ENCODE measurements at regions of chr10 and their contacts with region 1.

Region 1: DNA sequence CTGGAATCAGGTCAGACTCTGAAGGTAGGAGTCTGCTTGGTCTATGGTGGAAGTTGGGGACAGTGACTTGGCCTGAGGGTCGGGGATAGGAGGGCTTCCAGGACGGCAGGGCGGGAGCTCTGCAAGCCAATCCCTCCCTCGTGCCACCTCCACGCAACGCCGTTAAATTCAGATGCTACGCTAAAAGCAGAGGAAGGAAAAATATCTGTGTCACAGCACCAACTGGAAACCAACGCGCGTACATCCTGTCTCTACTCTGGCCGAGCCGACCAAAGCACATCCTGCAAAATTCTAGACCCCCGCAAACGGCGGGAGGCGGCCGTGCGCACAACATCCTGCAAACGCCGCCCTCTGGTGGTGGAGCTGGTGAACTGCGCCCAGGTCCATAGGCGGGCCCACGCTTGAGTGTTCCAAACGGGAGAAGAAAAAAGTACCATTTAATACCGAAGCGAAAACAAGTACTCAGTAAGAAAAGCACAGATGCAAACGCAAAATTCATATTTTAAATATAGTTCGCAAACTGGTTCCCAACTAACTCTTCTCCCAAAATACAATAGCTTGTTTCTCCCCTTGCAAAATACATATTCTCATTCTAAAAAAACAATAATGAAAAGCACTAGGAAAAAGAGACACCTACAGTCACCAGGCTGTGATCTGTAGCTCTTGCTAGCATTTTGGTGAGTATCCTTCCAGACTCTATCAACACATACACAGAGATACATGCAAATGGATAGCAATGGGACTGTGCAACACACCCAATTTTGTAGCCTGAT is 45.7 kb upstream of the HSPA12A start:
- DNase-seq: peak; percentile 84
- H3K4me3 Mint-ChIP-seq: peak overlapping the region; percentile 36
- H3K27ac Mint-ChIP-seq: no peak overlapping the region
- H3K4me1 Mint-ChIP-seq: peaks cover 11% of the 10 kb centered on the region
- H3K27me3 Mint-ChIP-seq: peaks cover 34% of the 10 kb centered on the region

Region 2: DNA sequence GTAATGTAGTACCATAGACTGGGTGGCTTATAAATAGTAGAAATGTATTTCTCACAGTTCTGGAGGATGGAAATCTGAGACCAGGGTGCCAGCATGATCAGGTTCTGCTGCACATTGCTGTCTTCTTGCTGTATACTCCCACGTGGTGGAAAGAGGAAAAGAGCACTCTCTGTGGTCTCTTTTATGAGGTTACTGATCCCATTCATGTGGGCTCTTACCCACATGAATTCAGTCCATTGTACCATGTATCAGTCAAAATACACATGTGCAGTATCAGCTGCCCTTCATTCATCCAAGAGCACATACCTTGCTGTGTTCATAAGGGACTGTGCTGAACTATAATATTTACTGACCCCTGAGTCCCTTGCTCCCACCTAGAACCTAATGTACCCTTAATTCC is 150.2 kb before region 1 on chr10:
- CTCF ChIA-PET with region 1: no interaction called
- intact Hi-C with region 1: no loop called
- DNase-seq: no peak
- H3K4me3 Mint-ChIP-seq: no peak overlapping the region
- H3K27ac Mint-ChIP-seq: no peak overlapping the region
- H3K4me1 Mint-ChIP-seq: no peaks in the 10 kb centered on the region
- H3K27me3 Mint-ChIP-seq: peaks cover 34% of the 10 kb centered on the region

Region 3: GRCh38 chr10:116683821-116684220 is 104.3 kb before region 1 on chr10:
- CTCF ChIA-PET with region 1: interaction called, 61 read pairs
- intact Hi-C with region 1: loop called (anchors 1 kb)
- DNase-seq: no peak
- H3K4me3 Mint-ChIP-seq: no peak overlapping the region
- H3K27ac Mint-ChIP-seq: no peak overlapping the region
- H3K4me1 Mint-ChIP-seq: peaks cover 2% of the 10 kb centered on the region
- H3K27me3 Mint-ChIP-seq: peaks cover 27% of the 10 kb centered on the region

Region 4: DNA sequence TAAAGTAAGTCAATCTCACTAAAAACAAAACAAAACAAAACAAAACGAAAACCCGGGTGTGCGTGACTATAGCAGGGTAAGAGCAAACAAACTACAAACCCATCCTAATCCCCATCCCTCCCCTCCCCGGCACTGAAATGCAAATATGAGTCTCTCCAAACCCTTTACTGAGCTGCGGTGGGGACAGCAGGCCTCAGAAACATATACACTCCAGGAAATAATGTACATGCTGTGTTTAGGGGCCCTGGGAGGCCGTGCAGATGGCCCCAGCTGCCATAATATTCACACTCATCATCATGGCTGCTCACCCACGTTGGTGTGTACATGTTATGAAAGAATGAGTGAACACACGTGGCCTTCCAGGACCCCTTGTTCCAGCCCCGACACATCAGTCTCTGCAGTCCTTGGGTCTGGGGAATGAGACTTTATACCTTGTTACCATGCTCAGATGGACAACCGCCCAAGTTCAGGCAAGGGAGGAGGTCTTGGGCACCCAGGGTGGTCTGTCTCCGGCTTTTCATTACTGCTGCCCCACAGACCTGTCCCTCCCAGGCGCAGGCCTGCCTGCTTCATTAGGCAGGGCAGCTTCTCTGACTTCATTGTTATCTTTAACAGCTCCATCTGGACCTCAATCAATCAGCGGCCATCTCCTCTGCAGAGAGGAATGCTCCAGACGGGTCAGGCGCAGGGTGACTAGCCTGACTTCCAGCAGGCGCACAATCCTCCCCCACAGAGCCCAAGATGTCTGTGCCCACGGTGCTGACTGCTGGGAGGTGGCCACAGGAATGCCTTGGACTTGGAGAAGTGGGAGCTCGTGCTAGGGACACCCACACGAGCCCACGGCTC is 66.3 kb before region 1 on chr10:
- CTCF ChIA-PET with region 1: interaction called, 5 read pairs
- intact Hi-C with region 1: loop called (anchors 2 kb)
- DNase-seq: no peak
- H3K4me3 Mint-ChIP-seq: no peak overlapping the region
- H3K27ac Mint-ChIP-seq: no peak overlapping the region
- H3K4me1 Mint-ChIP-seq: peaks cover 41% of the 10 kb centered on the region
- H3K27me3 Mint-ChIP-seq: peaks cover 70% of the 10 kb centered on the region

Region 5: GRCh38 chr10:116771101-116771958 is 16.7 kb before region 1 on chr10:
- CTCF ChIA-PET with region 1: interaction called, 14 read pairs
- intact Hi-C with region 1: no loop called
- DNase-seq: no peak
- H3K4me3 Mint-ChIP-seq: no peak overlapping the region
- H3K27ac Mint-ChIP-seq: no peak overlapping the region
- H3K4me1 Mint-ChIP-seq: no peaks in the 10 kb centered on the region
- H3K27me3 Mint-ChIP-seq: peaks cover 33% of the 10 kb centered on the region

Region 6: DNA sequence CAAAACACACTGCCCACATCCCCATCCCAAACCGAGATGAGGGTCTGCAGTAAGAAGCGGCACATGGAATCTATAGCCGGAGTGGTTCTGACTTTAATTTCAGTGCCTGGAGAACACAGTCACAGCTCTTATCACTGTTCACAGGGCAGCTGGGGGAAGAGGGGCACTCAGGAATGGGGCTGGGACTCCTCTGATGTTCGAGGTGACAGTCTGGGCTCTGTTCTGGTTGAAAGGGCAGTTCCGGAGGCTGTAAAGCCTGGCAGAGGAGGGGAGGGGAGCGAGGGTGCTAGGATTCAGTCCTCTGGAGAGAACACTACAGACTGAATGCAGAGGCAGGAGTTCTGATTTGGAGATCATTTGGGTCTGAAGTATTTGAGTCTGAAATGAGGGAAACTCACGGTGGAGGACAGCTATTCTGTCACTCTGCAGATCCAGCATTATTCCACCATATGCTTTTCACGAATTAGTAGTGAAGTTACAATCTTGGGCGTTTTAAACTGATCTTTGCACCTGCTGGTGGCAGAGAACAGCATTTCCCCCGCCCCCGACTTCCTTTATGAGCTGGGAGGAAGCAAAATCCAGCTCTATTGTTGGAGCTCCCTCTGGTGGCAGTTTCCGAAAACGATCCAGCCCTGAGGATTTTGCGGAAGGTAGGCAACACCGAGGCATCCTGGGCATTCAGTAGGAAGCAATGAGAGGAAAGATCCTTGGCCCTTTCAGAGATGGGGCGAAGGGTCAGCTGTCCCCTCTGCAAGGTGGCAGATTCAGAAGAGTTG is 386.5 kb after region 1 on chr10:
- CTCF ChIA-PET with region 1: interaction called, 44 read pairs
- intact Hi-C with region 1: loop called (anchors 2 kb)
- DNase-seq: peak; percentile 95
- H3K4me3 Mint-ChIP-seq: peak overlapping the region; percentile 78
- H3K27ac Mint-ChIP-seq: peak overlapping the region; percentile 16
- H3K4me1 Mint-ChIP-seq: peaks cover 15% of the 10 kb centered on the region
- H3K27me3 Mint-ChIP-seq: peaks cover 25% of the 10 kb centered on the region

Region 7: DNA sequence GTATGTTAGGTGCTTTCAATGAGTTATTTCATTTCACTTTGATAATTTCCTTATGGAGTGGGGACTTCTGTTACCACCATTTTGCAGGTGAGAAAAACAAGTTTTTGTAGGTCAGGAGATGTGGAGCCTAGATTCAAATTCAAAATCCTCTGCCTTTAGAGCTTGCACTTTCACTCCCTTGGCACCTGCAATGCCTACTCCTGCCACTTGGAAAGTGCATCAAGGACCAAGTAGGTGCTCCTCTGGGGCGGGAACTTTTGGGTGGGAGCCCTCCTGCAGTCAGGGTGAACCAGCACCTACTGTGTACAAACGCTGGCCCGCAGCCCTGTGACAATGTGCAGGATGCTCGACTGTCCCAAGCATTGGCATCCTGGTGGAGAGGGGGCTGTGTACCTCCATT is 953.4 kb after region 1 on chr10:
- CTCF ChIA-PET with region 1: no interaction called
- intact Hi-C with region 1: no loop called
- DNase-seq: no peak
- H3K4me3 Mint-ChIP-seq: no peak overlapping the region
- H3K27ac Mint-ChIP-seq: no peak overlapping the region
- H3K4me1 Mint-ChIP-seq: no peaks in the 10 kb centered on the region
- H3K27me3 Mint-ChIP-seq: peaks cover 10% of the 10 kb centered on the region

Measured in activated naive CD4-positive, alpha-beta T cell treated with anti-CD3 and anti-CD28 coated beads for 36 hours (primary cell).